CD8-positive, alpha-beta T cell (primary cell): ENCODE measurements at regions of chr5 and their contacts with region 1.

Region 1: GRCh38 chr5:119435436-119436132 is 16.7 kb upstream of the HSD17B4 start:
- DNase-seq: peak; percentile 50 to 83 (median 74)
- ATAC-seq: peak; percentile 84
- H3K4me3 ChIP-seq: no peak overlapping the region
- H3K4me3 Mint-ChIP-seq: no peak overlapping the region
- H3K27ac ChIP-seq: no peak overlapping the region
- H3K27ac Mint-ChIP-seq: no peak overlapping the region
- H3K4me1 ChIP-seq: peaks cover 3% of the 10 kb centered on the region
- H3K4me1 Mint-ChIP-seq: peaks cover 8% of the 10 kb centered on the region
- H3K27me3 ChIP-seq: no peaks in the 10 kb centered on the region
- H3K27me3 Mint-ChIP-seq: peaks cover 13% of the 10 kb centered on the region
- CTCF ChIP-seq: peak; percentile 64

Region 2: DNA sequence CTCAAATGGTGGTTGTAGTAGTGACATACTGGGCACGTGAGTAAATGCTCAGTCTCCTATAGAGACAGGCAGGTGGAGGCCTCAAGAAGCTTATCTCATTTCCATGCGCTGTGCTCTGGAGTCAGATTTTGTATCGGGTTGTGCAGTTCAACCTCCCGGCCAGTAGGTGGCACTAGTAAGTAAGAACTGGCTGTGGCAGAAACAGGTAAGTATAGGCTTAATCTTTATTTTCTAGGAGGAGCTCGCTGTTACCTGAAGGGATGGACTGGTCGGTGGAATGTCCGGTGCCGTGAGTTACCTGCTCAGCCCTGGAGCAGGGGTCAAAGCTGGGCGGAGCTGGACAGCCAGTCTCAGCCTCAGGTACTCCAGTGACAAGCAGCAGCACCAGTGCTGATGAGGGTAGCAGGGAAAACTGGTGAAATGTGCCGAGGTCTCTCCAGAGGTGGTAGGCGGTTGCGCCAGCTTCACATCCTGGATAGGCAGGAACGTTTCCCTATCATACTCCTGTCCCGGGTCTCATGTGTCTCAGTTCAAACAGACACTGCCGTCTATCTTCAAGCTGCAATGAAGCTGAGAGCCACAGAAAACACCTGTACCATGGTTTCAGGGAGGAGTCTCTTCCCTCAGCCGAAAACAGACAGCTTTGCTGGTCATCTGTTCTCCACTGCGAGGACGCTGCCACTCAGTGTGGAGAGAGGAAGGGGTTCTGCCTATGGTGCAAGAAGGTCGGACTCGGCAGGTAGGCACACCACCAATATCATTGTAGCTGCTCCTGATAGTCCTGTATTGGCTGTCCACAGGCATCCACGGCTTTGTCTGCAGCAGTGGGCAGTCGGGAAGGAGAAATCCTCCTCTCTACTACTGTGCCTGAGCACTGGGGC is 1980.6 kb before region 1 on chr5:
- CTCF ChIA-PET with region 1: no interaction called
- POLR2A ChIA-PET with region 1: no interaction called
- intact Hi-C with region 1: loop called in 1 of 2 experiments (anchors 10 kb)
- DNase-seq: peak in 6 of 9 experiments; percentile 12 to 50 (median 29)
- ATAC-seq: peak; percentile 72
- H3K4me3 ChIP-seq: peak overlapping the region in 1 of 2 experiments; percentile 22
- H3K4me3 Mint-ChIP-seq: peak overlapping the region; percentile 58
- H3K27ac ChIP-seq: no peak overlapping the region
- H3K27ac Mint-ChIP-seq: no peak overlapping the region
- H3K4me1 ChIP-seq: peaks cover 4% of the 10 kb centered on the region
- H3K4me1 Mint-ChIP-seq: peaks cover 7% of the 10 kb centered on the region
- H3K27me3 ChIP-seq: no peaks in the 10 kb centered on the region
- H3K27me3 Mint-ChIP-seq: peaks cover 2% of the 10 kb centered on the region
- CTCF ChIP-seq: peak; percentile 64

Region 3: DNA sequence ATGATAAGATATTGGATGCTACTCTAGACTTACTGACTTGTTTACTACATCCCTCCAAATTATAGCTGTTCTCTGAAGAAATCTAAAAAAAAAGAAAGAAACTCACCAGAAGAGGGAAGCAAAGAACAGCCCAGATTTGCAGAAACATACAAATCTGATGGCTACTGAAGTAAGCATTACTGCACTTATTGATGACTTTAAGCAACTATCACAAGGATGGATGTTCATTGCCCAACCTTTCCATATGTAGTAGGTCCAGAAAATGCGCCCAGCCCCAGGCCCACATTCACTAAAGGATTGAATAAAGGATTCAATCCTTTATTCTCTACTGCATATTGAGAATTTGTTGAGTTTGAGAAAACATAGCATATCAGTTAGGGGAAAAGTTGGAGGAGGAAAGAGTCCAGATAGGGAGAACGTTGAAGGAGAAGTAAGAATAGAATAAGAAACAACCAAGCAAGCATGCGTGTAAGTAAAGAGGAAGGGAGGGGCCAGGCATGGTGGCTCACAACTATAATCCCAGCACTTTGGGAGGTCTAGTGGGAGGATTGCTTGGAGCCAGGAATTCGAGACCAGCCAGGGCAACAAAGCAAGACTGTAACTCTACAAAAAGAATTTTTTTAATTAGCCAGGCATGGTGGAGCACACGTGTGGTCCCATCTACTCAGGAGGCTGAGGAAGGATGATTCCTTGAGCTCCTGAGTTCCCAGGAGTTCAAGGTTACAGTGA is 413.4 kb before region 1 on chr5:
- CTCF ChIA-PET with region 1: interaction called, 17 read pairs
- POLR2A ChIA-PET with region 1: no interaction called
- intact Hi-C with region 1: loop called (anchors 1 kb)
- DNase-seq: peak in 2 of 9 experiments; percentile 48 to 56
- ATAC-seq: peak; percentile 42
- H3K4me3 ChIP-seq: no peak overlapping the region
- H3K4me3 Mint-ChIP-seq: no peak overlapping the region
- H3K27ac ChIP-seq: no peak overlapping the region
- H3K27ac Mint-ChIP-seq: no peak overlapping the region
- H3K4me1 ChIP-seq: no peaks in the 10 kb centered on the region
- H3K4me1 Mint-ChIP-seq: no peaks in the 10 kb centered on the region
- H3K27me3 ChIP-seq: no peaks in the 10 kb centered on the region
- H3K27me3 Mint-ChIP-seq: no peaks in the 10 kb centered on the region
- CTCF ChIP-seq: peak; percentile 50

Region 4: DNA sequence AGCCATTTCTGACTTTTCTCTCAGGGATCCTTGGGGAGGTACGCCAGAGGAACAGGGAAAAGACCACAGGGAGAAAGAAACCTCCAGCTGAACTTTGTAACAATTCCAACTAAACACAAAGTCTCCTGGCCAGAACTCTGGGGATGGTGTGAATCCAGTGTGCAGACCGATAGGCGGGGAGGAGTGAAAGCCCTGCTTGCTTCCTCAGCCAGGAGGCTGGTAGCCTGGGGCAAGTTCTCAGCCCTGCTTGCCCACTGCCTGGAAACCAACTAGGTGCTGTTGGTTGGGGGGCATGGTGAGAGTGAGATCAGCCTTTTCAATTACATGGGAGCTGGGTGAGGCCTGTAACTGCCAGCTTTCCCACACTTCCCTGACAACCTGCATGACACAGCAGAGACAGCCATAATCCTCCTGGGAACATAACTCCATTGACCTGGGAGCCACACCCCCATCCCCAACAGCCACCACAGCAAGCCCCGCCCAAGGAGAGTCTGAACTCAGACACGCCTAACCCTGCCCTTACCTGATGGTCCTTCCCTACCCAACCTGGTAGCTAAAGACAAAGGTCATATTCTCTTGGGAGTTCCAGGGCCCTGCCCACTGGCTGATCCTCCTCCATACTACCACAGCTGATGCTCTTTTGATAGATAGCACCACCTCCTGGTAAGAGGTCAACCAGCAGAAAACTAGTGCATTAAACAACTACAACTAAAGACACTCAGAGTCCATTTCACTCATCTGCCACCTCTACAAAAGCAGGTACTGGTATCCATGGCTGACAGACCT is 179.8 kb before region 1 on chr5:
- CTCF ChIA-PET with region 1: no interaction called
- POLR2A ChIA-PET with region 1: no interaction called
- intact Hi-C with region 1: no loop called
- DNase-seq: peak in 2 of 9 experiments; percentile 29 to 46
- ATAC-seq: no peak
- H3K4me3 ChIP-seq: no peak overlapping the region
- H3K4me3 Mint-ChIP-seq: no peak overlapping the region
- H3K27ac ChIP-seq: no peak overlapping the region
- H3K27ac Mint-ChIP-seq: no peak overlapping the region
- H3K4me1 ChIP-seq: no peaks in the 10 kb centered on the region
- H3K4me1 Mint-ChIP-seq: no peaks in the 10 kb centered on the region
- H3K27me3 ChIP-seq: no peaks in the 10 kb centered on the region
- H3K27me3 Mint-ChIP-seq: no peaks in the 10 kb centered on the region
- CTCF ChIP-seq: no peak

Region 5: DNA sequence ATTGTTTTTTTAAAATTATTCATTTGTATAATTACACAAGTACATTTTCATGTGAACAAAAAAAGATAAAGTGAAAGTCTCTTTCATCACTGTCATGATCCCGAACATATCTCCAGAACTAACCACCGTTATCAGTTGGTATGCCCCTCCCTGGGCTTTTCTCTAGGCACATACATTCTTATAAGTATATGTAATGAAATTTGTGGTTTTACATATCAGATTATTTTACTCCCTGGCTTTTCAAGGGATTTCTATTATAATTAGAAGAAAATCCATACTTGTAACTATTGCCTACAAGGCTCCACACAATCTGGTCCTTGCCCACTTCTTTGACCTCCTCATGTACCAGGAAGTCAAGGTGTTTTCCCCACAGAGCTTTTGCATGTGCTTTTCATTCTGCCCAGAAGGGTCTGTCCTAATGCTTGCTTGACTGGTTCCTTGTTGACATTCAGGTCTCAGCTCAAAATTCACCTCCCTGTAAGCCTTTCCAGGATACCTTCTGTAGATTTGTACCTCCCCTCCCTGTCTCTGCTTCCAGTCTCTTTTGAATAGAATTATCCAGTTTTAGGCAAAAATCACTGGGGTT is 17.0 kb before region 1 on chr5:
- CTCF ChIA-PET with region 1: interaction called, 15 read pairs
- POLR2A ChIA-PET with region 1: interaction called, 4 read pairs
- intact Hi-C with region 1: no loop called
- DNase-seq: no peak
- ATAC-seq: no peak
- H3K4me3 ChIP-seq: no peak overlapping the region
- H3K4me3 Mint-ChIP-seq: no peak overlapping the region
- H3K27ac ChIP-seq: no peak overlapping the region
- H3K27ac Mint-ChIP-seq: no peak overlapping the region
- H3K4me1 ChIP-seq: peaks cover 8% of the 10 kb centered on the region
- H3K4me1 Mint-ChIP-seq: peaks cover 9% of the 10 kb centered on the region
- H3K27me3 ChIP-seq: no peaks in the 10 kb centered on the region
- H3K27me3 Mint-ChIP-seq: no peaks in the 10 kb centered on the region
- CTCF ChIP-seq: no peak